ENCODE measurements at regions of chr9 and their contacts with region 1.

Region 1: GRCh38 chr9:76658535-76659231 is 105.6 kb upstream of the PCA3 start:
- DNase-seq: no peak
- ATAC-seq: peak in 1 of 2 donors; percentile 44
- H3K4me3 ChIP-seq: no peak overlapping the region
- H3K27ac ChIP-seq: no peak overlapping the region
- H3K4me1 ChIP-seq: peaks cover 0 to 4% of the 10 kb centered on the region in 2 donors
- H3K27me3 ChIP-seq: no peaks in the 10 kb centered on the region
- CTCF ChIP-seq: peak in 3 of 5 experiments; percentile 15 to 37 (median 19)
- POLR2A ChIP-seq: no peak

Region 2: DNA sequence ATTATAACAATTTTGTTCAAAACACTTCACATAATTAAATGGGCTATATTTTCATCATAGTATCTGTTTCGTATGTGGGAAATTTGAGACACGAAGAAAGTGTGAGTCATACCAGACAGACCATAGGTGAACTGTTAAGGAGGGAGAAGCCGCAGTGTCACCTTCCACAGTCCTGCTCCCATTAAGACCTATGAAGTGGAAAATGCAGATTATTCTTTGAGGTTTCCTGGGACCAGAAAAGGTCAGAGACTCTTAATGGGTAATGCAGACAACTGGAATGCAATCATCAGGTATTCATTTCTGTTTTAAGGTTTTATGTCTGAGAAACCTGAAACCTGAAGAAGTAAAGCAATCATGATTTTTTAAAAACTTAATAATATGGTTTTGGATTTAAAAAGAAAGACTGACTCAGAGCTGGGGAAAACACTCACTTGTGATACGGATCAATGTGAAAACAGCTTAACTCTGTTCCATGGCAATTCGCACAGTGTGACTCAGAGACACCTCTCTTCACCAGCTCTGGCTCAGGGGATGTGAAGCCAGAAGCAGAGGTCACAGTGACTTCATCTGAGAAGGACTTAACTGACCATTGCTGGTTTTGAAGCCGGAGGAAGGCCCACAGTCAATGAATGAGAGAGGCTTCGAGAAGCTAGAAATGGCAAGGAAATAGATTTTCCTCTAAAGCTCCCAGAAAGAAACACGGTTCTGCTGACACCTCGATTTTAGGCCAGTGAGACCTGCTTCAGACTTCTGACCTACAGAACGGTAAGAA is 216.9 kb before region 1 on chr9:
- in situ Hi-C with region 1: no loop called
- intact Hi-C with region 1: loop called (anchors 5 kb)
- DNase-seq: no peak
- ATAC-seq: no peak
- H3K4me3 ChIP-seq: no peak overlapping the region
- H3K27ac ChIP-seq: no peak overlapping the region
- H3K4me1 ChIP-seq: no peaks in the 10 kb centered on the region
- H3K27me3 ChIP-seq: no peaks in the 10 kb centered on the region
- CTCF ChIP-seq: no peak
- POLR2A ChIP-seq: no peak

Region 3: DNA sequence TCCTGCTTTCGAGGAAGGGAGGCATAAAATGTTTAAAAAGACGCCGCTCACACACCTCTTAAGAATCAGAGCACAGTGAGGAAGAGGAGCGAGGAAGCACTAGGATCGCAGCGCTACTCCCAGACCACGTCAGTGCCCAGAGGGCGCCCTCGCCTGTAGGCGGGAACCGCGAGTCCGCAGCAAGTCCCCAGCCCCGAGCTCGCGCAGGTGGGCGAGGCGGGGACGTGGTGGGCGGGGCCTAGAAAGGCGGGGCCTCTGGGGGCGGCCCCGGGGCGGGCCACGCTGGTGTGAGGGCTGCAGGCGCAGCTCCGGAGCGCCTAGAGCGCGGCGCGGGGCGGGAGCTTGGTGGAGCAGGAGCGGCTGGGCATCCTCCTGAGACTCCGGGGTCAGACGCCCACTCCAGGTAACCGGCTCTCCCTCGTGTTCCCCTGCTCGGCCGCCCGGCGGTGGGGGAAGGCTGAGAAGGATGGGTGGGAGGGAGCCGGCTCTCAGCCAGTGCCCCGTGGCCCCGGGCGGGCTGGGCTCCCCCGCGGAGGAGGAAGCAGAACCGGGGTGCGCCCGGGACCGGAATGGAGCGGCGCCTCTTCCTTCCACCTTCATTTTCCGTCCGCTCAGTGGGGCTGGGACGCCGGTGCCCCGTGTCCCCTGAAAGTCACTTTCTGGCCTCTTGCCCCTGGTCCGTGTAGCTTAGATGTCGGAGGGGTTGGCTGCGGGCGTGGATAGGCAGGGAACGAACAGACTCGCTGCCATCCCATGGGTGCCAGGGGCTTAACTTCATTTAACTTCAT is 199.6 kb before region 1 on chr9 and contains the start of gene GCNT1:
- in situ Hi-C with region 1: loop called in 1 of 4 experiments (anchors 10 kb)
- intact Hi-C with region 1: no loop called
- DNase-seq: peak; percentile 35 to 46
- ATAC-seq: peak; percentile 30 to 60
- H3K4me3 ChIP-seq: peak within 1 kb of the TSS; percentile 53 to 75 (median 63)
- H3K27ac ChIP-seq: peak within 1 kb of the TSS in 3 of 4 donors; percentile 28 to 57 (median 38)
- H3K4me1 ChIP-seq: no peaks in the 10 kb centered on the region
- H3K27me3 ChIP-seq: peaks cover 2 to 14% (median 3%) of the 10 kb centered on the region in 3 donors
- CTCF ChIP-seq: peak in 2 of 5 experiments; percentile 22 to 30
- POLR2A ChIP-seq: peak; percentile 28 to 46
- total RNA-seq, gene GCNT1: 0.98 to 6.6 (median 4.2) TPM

Region 4: DNA sequence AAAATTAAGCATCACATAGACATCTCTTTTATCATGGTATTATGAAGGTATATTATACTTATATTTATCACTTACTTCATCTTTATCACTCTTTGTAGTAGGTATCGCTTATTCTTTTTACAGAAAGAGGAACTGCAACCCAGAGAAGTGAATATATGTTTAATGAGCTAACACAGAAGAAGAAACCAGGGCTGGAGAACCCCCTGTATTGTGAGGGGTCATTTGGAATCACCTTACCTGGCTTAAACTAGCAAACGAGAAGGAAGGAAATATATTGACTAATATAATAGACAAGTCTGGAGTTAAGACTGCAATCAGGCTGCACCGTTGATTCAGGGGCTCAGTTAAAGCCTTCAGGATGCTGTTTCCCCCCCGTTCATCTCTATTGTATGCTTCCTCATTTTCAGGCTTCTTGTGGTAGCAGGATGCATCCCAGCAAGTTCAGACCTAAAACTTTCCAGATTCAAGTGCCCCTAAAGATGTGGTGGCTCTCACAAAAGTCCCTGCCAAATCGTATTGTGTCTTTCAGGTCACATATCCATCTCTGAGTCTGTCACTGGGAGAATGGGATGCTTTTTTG is 53.3 kb before region 1 on chr9:
- in situ Hi-C with region 1: loop called in 1 of 4 experiments (anchors 10 kb)
- intact Hi-C with region 1: no loop called
- DNase-seq: no peak
- ATAC-seq: no peak
- H3K4me3 ChIP-seq: no peak overlapping the region
- H3K27ac ChIP-seq: no peak overlapping the region
- H3K4me1 ChIP-seq: no peaks in the 10 kb centered on the region
- H3K27me3 ChIP-seq: no peaks in the 10 kb centered on the region
- CTCF ChIP-seq: no peak
- POLR2A ChIP-seq: no peak

Region 5: GRCh38 chr9:76725011-76725546 is 66.4 kb after region 1 on chr9:
- in situ Hi-C with region 1: no loop called
- intact Hi-C with region 1: no loop called
- DNase-seq: no peak
- ATAC-seq: no peak
- H3K4me3 ChIP-seq: no peak overlapping the region
- H3K27ac ChIP-seq: no peak overlapping the region
- H3K4me1 ChIP-seq: no peaks in the 10 kb centered on the region
- H3K27me3 ChIP-seq: no peaks in the 10 kb centered on the region
- CTCF ChIP-seq: no peak
- POLR2A ChIP-seq: no peak

Measured in gastrocnemius medialis (tissue), 4 donors.